ENCODE measurements at regions of chr19 and their contacts with region 1.

Region 1: GRCh38 chr19:42693764-42694350 is 46.4 kb downstream of the PSG3 start:
- H3K4me3 ChIP-seq: no peak overlapping the region
- H3K27ac ChIP-seq: no peak overlapping the region
- H3K4me1 ChIP-seq: peaks cover 9% of the 10 kb centered on the region; the same call in 1 of the 2 replicates
- CTCF ChIP-seq: peak; percentile 70

Region 2: DNA sequence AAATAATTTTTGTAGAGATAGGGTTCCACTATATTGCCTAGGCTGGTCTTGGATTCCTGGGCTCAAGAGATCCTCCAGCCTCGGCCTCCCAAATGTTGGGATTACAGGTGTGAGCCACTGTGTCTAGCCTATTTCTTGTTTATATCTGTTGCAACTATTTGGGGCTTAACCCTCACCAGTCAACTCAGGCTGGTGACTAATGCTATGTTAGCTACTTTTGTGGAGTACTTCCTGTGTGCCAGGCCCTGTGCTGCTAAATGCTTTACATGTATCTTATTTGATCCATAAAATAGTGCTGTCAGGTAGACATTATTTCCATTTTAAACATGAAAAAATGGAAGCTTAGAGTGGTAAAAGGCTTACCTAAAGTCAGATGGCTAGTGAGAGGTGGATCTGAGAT is 179.4 kb before region 1 on chr19:
- CTCF ChIA-PET with region 1: no interaction called
- POLR2A ChIA-PET with region 1: no interaction called
- H3K4me3 ChIP-seq: no peak overlapping the region
- H3K27ac ChIP-seq: no peak overlapping the region
- H3K4me1 ChIP-seq: no peaks in the 10 kb centered on the region
- CTCF ChIP-seq: no peak

Region 3: DNA sequence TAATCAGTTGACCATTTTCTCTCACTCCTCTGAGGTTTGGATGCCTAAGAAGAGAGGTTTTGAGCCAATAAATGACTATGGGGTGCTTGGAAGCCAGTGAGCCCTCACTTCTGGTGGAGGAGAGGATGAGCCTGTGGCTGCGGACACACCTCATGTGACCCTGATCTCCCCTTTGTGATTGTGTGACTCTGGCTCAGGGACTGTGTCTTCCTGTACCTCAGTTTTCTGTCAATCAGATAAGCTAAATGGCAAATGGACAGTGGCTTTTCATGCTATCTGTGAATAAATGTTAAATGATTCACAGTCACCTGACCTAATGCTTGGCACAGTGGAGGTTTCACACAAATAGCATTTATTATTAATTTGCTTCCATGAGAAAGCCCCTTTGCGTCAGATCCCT is 68.9 kb after region 1 on chr19:
- CTCF ChIA-PET with region 1: interaction called, 15 read pairs
- POLR2A ChIA-PET with region 1: no interaction called
- H3K4me3 ChIP-seq: no peak overlapping the region
- H3K27ac ChIP-seq: no peak overlapping the region
- H3K4me1 ChIP-seq: no peaks in the 10 kb centered on the region
- CTCF ChIP-seq: no peak